Head of caudate nucleus (tissue), 42 donors: ENCODE measurements at regions of chr6 and their contacts with region 1.

Region 1: GRCh38 chr6:168132531-168133167 is 53.6 kb upstream of the FRMD1 start:
- DNase-seq: peak; percentile 75 to 94 (median 88)

Region 2: GRCh38 chr6:167907837-167908681 is 224.6 kb before region 1 on chr6:
- intact Hi-C with region 1: loop called (anchors 5 kb)
- DNase-seq: peak in 25 of 42 donors; percentile 19 to 78 (median 49)

Region 3: GRCh38 chr6:168469521-168469920 is 336.9 kb after region 1 on chr6:
- intact Hi-C with region 1: no loop called
- DNase-seq: no peak